Breast epithelium (tissue), 4 donors: ENCODE measurements at regions of chr6 and their contacts with region 1.

Region 1: GRCh38 chr6:118945217-118945616 is 10.3 kb upstream of the MCM9 start:
- DNase-seq: no peak
- H3K4me3 ChIP-seq: no peak overlapping the region
- H3K27ac ChIP-seq: no peak overlapping the region
- H3K4me1 ChIP-seq: no peaks in the 10 kb centered on the region
- H3K27me3 ChIP-seq: no peaks in the 10 kb centered on the region
- CTCF ChIP-seq: no peak
- POLR2A ChIP-seq: no peak

Region 2: GRCh38 chr6:118889163-118889562 is 56.1 kb before region 1 on chr6:
- intact Hi-C with region 1: loop called (anchors 2 kb)
- DNase-seq: no peak
- H3K4me3 ChIP-seq: no peak overlapping the region
- H3K27ac ChIP-seq: no peak overlapping the region
- H3K4me1 ChIP-seq: peaks cover 0 to 13% of the 10 kb centered on the region in 2 donors
- H3K27me3 ChIP-seq: no peaks in the 10 kb centered on the region
- CTCF ChIP-seq: no peak
- POLR2A ChIP-seq: no peak

Region 3: DNA sequence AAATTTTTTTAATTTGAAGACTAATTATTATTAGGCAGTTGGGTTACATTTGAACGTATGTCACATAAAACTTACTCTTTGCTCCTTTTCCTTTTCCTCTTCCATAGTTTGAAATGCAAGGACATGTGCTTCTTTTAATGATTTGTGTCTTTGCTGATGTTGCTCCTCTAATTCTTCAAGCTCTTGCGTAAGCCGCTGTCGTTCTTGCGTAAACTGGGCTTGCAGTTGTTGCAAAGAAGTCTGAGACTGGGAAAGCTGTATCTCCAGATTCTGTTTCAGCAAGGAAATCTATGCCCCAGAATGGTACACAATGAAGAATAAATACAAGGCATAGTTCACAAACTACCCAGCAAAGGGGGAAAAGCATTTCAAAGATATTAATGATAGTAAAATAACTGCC is 34.8 kb after region 1 on chr6:
- intact Hi-C with region 1: no loop called
- DNase-seq: no peak
- H3K4me3 ChIP-seq: no peak overlapping the region
- H3K27ac ChIP-seq: no peak overlapping the region
- H3K4me1 ChIP-seq: no peaks in the 10 kb centered on the region
- H3K27me3 ChIP-seq: no peaks in the 10 kb centered on the region
- CTCF ChIP-seq: no peak
- POLR2A ChIP-seq: no peak